ENCODE measurements at regions of chr18 and their contacts with region 1.

Region 1: GRCh38 chr18:66280470-66280869 is 323.4 kb downstream of the CDH19 start:
- DNase-seq: peak in 1 of 2 donors; percentile 5
- ATAC-seq: peak in 6 of 8 donors; percentile 53 to 87 (median 75)
- H3K4me3 ChIP-seq: no peak overlapping the region
- H3K27ac ChIP-seq: no peak overlapping the region
- H3K4me1 ChIP-seq: no peaks in the 10 kb centered on the region
- H3K27me3 ChIP-seq: no peaks in the 10 kb centered on the region
- CTCF ChIP-seq: peak in 5 of 9 donors; percentile 22 to 49 (median 39)

Region 2: GRCh38 chr18:65968239-65969004 is 312.0 kb before region 1 on chr18:
- intact Hi-C with region 1: loop called in 1 of 10 experiments (anchors 10 kb)
- DNase-seq: no peak
- ATAC-seq: no peak
- H3K4me3 ChIP-seq: no peak overlapping the region
- H3K27ac ChIP-seq: no peak overlapping the region
- H3K4me1 ChIP-seq: no peaks in the 10 kb centered on the region
- H3K27me3 ChIP-seq: no peaks in the 10 kb centered on the region
- CTCF ChIP-seq: peak in 6 of 9 donors; percentile 17 to 41 (median 28)

Region 3: DNA sequence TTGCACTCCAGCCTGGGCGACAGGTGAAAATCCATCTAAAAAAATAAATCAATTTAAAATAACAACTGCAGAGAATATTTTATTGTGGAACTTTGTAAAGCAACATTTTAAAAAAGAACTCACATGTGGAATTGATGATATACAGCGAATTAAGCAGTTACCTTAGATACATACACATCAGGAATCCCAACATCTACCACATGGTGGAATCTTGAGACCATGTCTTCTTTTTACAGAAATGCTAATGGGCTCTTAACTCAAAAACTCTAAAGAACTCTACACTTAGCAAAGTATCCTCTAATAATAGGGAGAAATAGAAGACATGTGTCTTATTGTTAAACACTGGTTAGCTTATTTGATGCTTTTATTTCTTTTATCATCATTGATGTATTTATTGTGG is 156.1 kb before region 1 on chr18:
- intact Hi-C with region 1: loop called in 4 of 10 experiments (anchors 2 to 10 kb)
- DNase-seq: no peak
- ATAC-seq: no peak
- H3K4me3 ChIP-seq: no peak overlapping the region
- H3K27ac ChIP-seq: no peak overlapping the region
- H3K4me1 ChIP-seq: no peaks in the 10 kb centered on the region
- H3K27me3 ChIP-seq: no peaks in the 10 kb centered on the region
- CTCF ChIP-seq: peak in 7 of 9 donors; percentile 22 to 54 (median 49)

Measured in heart right ventricle (tissue), 16 donors.